Gastrocnemius medialis (tissue), 4 donors: ENCODE measurements at regions of chr1 and their contacts with region 1.

Region 1: GRCh38 chr1:16946646-16947045 is 24.9 kb downstream of the CROCC start:
- DNase-seq: no peak
- ATAC-seq: no peak
- H3K4me3 ChIP-seq: no peak overlapping the region
- H3K27ac ChIP-seq: no peak overlapping the region
- H3K4me1 ChIP-seq: no peaks in the 10 kb centered on the region
- H3K27me3 ChIP-seq: no peaks in the 10 kb centered on the region
- CTCF ChIP-seq: no peak
- POLR2A ChIP-seq: no peak

Region 2: DNA sequence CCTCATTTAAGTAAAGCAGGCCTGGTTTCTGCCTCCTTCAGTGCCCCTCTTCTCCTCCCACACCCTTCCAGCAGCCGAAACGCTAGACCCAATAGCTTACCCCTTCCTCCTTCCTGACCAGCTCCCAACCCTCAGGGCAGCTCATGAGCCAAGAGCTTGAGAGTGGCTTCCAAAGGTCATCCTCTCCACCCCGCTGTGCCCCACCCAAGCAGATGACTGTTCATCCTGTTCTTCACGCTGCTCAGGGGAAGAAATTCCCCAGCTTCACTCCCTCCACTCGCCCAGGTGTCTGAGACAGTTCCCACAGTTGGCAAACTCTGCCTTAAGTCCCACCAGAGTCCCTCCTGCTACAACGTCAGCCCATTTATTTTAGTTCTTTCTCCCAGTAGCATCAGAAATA is 757.6 kb before region 1 on chr1:
- in situ Hi-C with region 1: no loop called
- intact Hi-C with region 1: no loop called
- DNase-seq: no peak
- ATAC-seq: peak; percentile 31 to 40
- H3K4me3 ChIP-seq: no peak overlapping the region
- H3K27ac ChIP-seq: no peak overlapping the region
- H3K4me1 ChIP-seq: no peaks in the 10 kb centered on the region
- H3K27me3 ChIP-seq: peaks cover 0 to 5% (median 4%) of the 10 kb centered on the region in 3 donors
- CTCF ChIP-seq: no peak
- POLR2A ChIP-seq: no peak

Region 3: GRCh38 chr1:16613185-16614147 is 333.2 kb before region 1 on chr1 and contains the start of gene NBPF1:
- in situ Hi-C with region 1: no loop called
- intact Hi-C with region 1: loop called (anchors 1 kb)
- DNase-seq: peak; percentile 92 to 96
- ATAC-seq: peak; percentile 95 to 96
- H3K4me3 ChIP-seq: peak within 1 kb of the TSS; percentile 57 to 82 (median 74)
- H3K27ac ChIP-seq: peak within 1 kb of the TSS; percentile 69 to 84 (median 78)
- H3K4me1 ChIP-seq: peaks cover 16 to 24% of the 10 kb centered on the region in 2 donors
- H3K27me3 ChIP-seq: no peaks in the 10 kb centered on the region
- CTCF ChIP-seq: peak in 2 of 5 experiments; percentile 13 to 17
- POLR2A ChIP-seq: peak; percentile 76 to 90
- total RNA-seq, gene NBPF1: 6.6 to 20.0 (median 11.2) TPM

Region 4: DNA sequence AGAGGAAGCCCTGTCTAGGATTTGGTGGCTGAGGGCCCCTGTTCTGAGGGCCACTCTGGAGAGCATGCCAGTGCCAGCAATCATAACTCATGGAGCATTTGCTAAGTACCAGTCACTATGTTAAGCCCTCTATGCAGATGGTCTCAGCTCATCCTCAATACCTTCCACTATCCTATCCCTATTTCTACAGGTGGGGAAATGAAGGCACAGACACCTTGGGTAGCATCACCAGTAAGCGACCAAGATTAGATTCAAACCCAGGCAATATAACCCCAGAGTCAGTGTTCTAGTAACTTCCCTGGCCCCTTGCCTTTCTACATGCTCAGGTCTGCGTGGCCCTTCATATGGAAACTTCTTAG is 325.4 kb before region 1 on chr1:
- in situ Hi-C with region 1: loop called in 1 of 4 experiments (anchors 5 kb)
- intact Hi-C with region 1: no loop called
- DNase-seq: no peak
- ATAC-seq: no peak
- H3K4me3 ChIP-seq: no peak overlapping the region
- H3K27ac ChIP-seq: peak overlapping the region in 1 of 4 donors; percentile 14
- H3K4me1 ChIP-seq: peaks cover 13 to 14% of the 10 kb centered on the region in 2 donors
- H3K27me3 ChIP-seq: no peaks in the 10 kb centered on the region
- CTCF ChIP-seq: peak in 2 of 5 experiments; percentile 17 to 24
- POLR2A ChIP-seq: no peak

Region 5: DNA sequence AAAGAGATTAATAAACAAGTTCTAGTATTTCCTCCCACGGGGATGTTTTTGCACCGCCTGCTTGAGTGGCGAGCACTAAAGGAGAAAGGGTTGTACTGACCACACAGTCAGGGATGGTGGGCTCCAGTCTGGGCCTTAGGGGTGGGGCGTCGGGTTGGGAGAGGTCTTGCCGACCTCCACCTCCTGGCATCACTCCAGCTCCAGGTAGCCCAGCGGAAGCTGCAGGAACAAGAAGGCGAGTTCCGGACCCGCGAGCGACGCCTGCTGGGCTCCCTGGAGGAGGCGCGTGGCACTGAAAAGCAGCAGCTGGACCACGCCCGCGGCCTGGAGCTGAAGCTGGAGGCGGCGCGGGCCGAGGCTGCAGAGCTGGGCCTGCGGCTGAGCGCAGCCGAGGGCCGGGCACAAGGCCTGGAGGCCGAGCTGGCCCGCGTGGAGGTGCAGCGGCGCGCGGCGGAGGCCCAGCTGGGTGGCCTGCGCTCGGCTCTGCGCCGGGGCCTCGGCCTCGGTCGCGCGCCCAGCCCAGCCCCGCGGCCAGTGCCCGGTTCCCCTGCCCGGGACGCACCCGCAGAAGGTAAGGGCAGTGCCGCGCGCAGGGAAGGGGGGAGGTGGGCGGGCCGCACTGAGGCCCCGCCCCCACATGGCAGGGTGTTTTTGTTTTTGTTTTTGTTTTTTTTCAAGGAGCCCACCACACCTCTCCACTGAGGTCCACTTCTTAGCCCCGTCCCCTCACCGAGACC is 14.1 kb after region 1 on chr1:
- in situ Hi-C with region 1: no loop called
- intact Hi-C with region 1: loop called (anchors 1 kb)
- DNase-seq: peak; percentile 56 to 68
- ATAC-seq: peak; percentile 55 to 75
- H3K4me3 ChIP-seq: peak overlapping the region; percentile 21 to 45 (median 36)
- H3K27ac ChIP-seq: peak overlapping the region in 2 of 4 donors; percentile 9 to 31
- H3K4me1 ChIP-seq: peaks cover 6% of the 10 kb centered on the region in 2 donors
- H3K27me3 ChIP-seq: no peaks in the 10 kb centered on the region
- CTCF ChIP-seq: peak; percentile 46 to 68 (median 59)
- POLR2A ChIP-seq: no peak

Region 6: DNA sequence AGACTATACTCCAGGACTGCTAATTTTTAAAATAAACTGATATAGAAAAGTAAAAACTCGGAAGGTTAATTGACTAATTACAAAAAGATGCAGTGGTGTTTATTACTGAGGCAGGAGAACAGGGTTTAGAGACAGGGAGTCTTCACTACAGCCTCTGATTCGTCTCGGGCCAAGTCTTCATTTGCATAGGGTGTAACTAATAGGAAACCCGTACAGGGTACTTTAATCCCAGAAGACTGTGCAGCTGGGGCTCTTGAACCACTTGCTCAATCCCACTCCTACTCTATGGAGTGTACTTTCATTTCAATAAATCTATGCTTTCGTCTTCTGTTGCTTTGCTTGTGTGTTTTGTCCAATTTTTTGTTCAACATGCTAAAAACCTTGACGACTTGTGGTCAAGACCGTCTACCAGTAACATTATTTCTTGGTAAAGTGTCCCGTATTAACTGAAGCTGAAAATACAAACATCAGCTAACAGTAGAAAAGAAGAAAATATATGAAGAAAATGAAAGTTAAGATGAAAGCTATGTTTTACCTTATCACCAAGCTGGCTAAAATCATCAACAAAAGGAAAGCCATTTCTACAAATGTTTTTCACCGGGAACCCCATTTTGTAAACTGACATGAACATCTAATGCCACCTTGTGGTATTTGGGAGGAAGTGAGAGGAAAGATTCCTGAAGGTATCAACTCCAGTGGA is 99.1 kb after region 1 on chr1:
- in situ Hi-C with region 1: loop called in 2 of 4 experiments (anchors 10 kb)
- intact Hi-C with region 1: loop called (anchors 1 kb)
- DNase-seq: no peak
- ATAC-seq: peak; percentile 62 to 65
- H3K4me3 ChIP-seq: peak overlapping the region in 2 of 4 donors; percentile 1 to 12
- H3K27ac ChIP-seq: peak overlapping the region; percentile 24 to 62 (median 33)
- H3K4me1 ChIP-seq: peaks cover 9 to 24% of the 10 kb centered on the region in 2 donors
- H3K27me3 ChIP-seq: no peaks in the 10 kb centered on the region
- CTCF ChIP-seq: peak; percentile 54 to 82 (median 67)
- POLR2A ChIP-seq: no peak